HepG2 (cell line): ENCODE measurements at regions of chr21 and their contacts with region 1.

Region 1: DNA sequence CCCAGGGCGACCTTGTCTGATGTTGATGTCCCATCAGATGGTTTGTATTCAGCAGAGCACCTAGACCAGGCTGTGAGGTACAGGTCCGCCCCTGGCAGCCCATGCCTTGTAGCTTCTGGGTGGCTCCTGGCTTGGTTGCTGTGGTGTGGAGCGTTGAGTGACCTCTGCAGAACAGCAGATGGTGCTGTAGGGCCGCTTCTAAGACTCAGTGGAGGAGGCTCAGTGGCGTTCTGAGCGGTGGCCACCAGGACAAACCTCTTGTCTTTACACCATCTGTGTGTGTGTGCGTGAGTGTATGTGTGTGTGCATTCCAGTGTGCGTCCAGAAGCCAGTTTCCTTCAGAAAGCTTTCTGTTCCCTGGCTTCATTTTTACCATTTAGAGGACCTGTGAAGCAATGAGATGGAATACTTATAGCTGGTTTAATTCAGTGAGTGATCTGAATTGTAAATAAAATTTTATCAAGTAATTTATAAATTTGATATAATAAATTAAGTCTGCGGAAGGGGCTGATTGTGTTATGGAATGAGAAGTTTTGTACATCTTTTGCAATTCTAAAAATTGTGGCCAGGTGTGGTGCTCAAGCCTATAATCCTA is 66.1 kb downstream of the ADARB1 start:
- DNase-seq: peak; percentile 86
- ATAC-seq: peak; percentile 96
- H3K4me3 ChIP-seq: no peak overlapping the region
- H3K27ac ChIP-seq: no peak overlapping the region
- H3K4me1 ChIP-seq: peaks cover 12% of the 10 kb centered on the region
- H3K27me3 ChIP-seq: no peaks in the 10 kb centered on the region
- CTCF ChIP-seq: peak; percentile 94
- EP300 ChIP-seq: no peak
- POLR2A ChIP-seq: no peak
- RAD21 ChIP-seq: peak; percentile 91

Region 2: GRCh38 chr21:45270306-45270821 is 129.9 kb after region 1 on chr21:
- CTCF ChIA-PET with region 1: interaction called, 7 read pairs
- POLR2A ChIA-PET with region 1: no interaction called
- in situ Hi-C with region 1: no loop called
- intact Hi-C with region 1: loop called (anchors 5 kb)
- DNase-seq: no peak
- ATAC-seq: peak; percentile 78
- H3K4me3 ChIP-seq: no peak overlapping the region
- H3K27ac ChIP-seq: no peak overlapping the region
- H3K4me1 ChIP-seq: no peaks in the 10 kb centered on the region
- H3K27me3 ChIP-seq: no peaks in the 10 kb centered on the region
- CTCF ChIP-seq: peak; percentile 65
- EP300 ChIP-seq: no peak
- POLR2A ChIP-seq: no peak
- RAD21 ChIP-seq: no peak